H1 (cell line): ENCODE measurements at regions of chr19 and their contacts with region 1.

Region 1: GRCh38 chr19:51097166-51097738 is 11.0 kb downstream of the CTU1 start:
- DNase-seq: peak in 1 of 2 experiments; percentile 89
- H3K4me3 ChIP-seq: no peak overlapping the region
- H3K27ac ChIP-seq: no peak overlapping the region
- H3K4me1 ChIP-seq: peaks cover 0 to 6% (median 2%) of the 10 kb centered on the region in 4 experiments; a peak in 4 of 7 replicates
- H3K27me3 ChIP-seq: no peaks in the 10 kb centered on the region; a peak in 1 of 7 replicates
- CTCF ChIP-seq: peak; percentile 69 to 74 (median 70)
- EP300 ChIP-seq: no peak
- POLR2A ChIP-seq: no peak
- RAD21 ChIP-seq: peak; percentile 55 to 66

Region 2: DNA sequence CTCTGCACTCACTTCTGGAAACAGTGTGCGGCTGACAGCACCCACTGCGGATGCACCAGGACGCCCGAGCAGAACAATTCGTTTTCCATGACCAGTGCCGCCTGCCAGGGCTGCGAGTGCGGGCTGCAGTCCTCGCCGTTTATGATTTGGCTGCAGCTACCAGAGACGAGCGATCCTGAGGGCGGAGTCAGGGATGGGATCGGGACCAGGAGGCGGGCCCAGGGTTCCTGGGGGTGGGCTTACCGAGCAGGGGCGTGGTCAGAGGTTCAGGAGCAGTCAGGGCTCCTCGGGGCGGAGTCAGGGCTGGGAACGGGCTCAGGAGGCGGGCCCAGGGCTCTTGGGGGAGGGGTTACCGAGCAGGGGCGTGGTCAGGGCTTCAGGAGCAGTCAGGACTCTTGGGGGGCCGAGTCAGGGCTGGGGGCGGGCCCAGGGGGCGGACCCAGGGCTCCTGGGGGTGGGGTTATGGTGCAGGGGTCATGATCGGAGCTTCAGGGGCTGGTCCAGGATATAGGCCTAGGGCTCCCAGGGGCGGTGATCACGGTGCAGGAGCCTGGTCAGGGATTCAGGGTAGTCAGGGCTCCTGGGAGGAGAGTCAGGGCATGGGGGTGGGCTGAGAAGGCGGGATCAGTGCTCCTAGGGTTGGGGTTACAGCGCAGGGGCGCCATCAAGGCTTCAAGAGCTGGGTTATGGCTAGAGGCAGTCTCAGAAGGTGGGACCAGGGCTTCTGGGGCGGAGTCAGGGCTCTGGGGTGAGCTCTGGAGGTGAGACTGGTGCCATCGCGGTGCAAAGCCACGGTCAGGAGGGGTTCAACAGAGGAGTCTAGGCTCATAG is 187.8 kb before region 1 on chr19:
- CTCF ChIA-PET with region 1: interaction called, 25 read pairs
- POLR2A ChIA-PET with region 1: no interaction called
- DNase-seq: peak; percentile 95 to 100
- H3K4me3 ChIP-seq: peak overlapping the region; percentile 38 to 68 (median 54)
- H3K27ac ChIP-seq: no peak overlapping the region
- H3K4me1 ChIP-seq: peaks cover 0 to 14% (median 9%) of the 10 kb centered on the region in 4 experiments; a peak in 5 of 7 replicates
- H3K27me3 ChIP-seq: peaks cover 20 to 40% (median 32%) of the 10 kb centered on the region in 4 experiments
- CTCF ChIP-seq: no peak
- EP300 ChIP-seq: no peak
- POLR2A ChIP-seq: no peak
- RAD21 ChIP-seq: no peak

Region 3: DNA sequence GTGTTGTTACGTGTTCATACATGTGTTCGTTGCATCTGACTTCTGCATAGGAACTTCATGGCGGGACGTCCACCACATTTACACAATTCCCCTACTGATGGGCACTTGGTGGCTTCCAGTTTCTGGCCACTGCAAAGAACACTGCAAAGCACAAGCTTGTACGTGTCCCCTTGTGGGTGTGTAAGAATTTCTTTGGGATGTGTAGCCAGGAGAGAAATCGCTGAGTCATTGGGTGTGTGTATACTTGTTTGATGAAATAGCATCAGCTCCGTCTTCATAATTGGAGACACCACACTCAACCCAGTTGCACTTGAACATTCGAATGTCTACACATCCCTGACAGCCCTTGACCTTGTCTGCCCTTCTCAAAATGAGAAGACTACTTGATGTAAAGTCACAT is 163.6 kb before region 1 on chr19:
- CTCF ChIA-PET with region 1: interaction called, 12 read pairs
- POLR2A ChIA-PET with region 1: no interaction called
- DNase-seq: no peak
- H3K4me3 ChIP-seq: no peak overlapping the region
- H3K27ac ChIP-seq: no peak overlapping the region
- H3K4me1 ChIP-seq: no peaks in the 10 kb centered on the region
- H3K27me3 ChIP-seq: 0 out of 7 replicates have a peak, but pooled peaks cover 0 to 2% (median 0%) of the 10 kb centered on the region in 4 experiments
- CTCF ChIP-seq: no peak
- EP300 ChIP-seq: no peak
- POLR2A ChIP-seq: no peak
- RAD21 ChIP-seq: no peak

Region 4: GRCh38 chr19:50972795-50973376 is 124.4 kb before region 1 on chr19:
- CTCF ChIA-PET with region 1: interaction called, 10 read pairs
- POLR2A ChIA-PET with region 1: no interaction called
- DNase-seq: no peak
- H3K4me3 ChIP-seq: no peak overlapping the region
- H3K27ac ChIP-seq: no peak overlapping the region
- H3K4me1 ChIP-seq: peaks cover 4 to 27% (median 13%) of the 10 kb centered on the region in 4 experiments; a peak in 6 of 7 replicates
- H3K27me3 ChIP-seq: no peaks in the 10 kb centered on the region
- CTCF ChIP-seq: no peak
- EP300 ChIP-seq: no peak
- POLR2A ChIP-seq: no peak
- RAD21 ChIP-seq: no peak

Region 5: DNA sequence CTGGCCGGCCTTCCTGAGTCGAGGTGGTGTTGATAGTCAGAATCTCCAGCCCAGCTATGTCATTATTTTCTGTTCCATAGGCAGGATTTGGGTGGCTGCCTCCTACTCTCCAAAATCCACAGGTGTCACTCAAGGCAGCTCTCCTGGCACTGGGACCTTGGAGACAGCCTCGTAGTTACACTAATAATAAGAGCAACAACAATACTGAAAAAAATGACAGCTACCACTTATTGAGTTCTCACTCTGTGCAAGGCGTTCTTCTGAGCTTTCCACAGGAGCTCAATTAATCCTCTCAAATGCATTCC is 50.3 kb before region 1 on chr19:
- CTCF ChIA-PET with region 1: interaction called, 17 read pairs
- POLR2A ChIA-PET with region 1: no interaction called
- DNase-seq: no peak
- H3K4me3 ChIP-seq: peak overlapping the region in 2 of 4 experiments; percentile 12 to 38; a peak in 2 of 8 replicates
- H3K27ac ChIP-seq: peak overlapping the region; percentile 5; the same call in 1 of the 2 replicates
- H3K4me1 ChIP-seq: peaks cover 0 to 15% (median 7%) of the 10 kb centered on the region in 4 experiments; a peak in 4 of 7 replicates
- H3K27me3 ChIP-seq: no peaks in the 10 kb centered on the region
- CTCF ChIP-seq: no peak
- EP300 ChIP-seq: no peak
- POLR2A ChIP-seq: peak in 1 of 2 experiments; percentile 39; a peak in 1 of 3 replicates
- RAD21 ChIP-seq: no peak

Region 6: GRCh38 chr19:51079481-51080110 is 17.7 kb before region 1 on chr19:
- CTCF ChIA-PET with region 1: interaction called, 21 read pairs
- POLR2A ChIA-PET with region 1: interaction called, 4 read pairs
- DNase-seq: no peak
- H3K4me3 ChIP-seq: no peak overlapping the region
- H3K27ac ChIP-seq: no peak overlapping the region
- H3K4me1 ChIP-seq: peaks cover 2 to 6% (median 3%) of the 10 kb centered on the region in 4 experiments; a peak in 4 of 7 replicates
- H3K27me3 ChIP-seq: no peaks in the 10 kb centered on the region
- CTCF ChIP-seq: no peak
- EP300 ChIP-seq: no peak
- POLR2A ChIP-seq: no peak
- RAD21 ChIP-seq: no peak

Region 7: GRCh38 chr19:51219307-51219706 is 122.1 kb after region 1 on chr19:
- CTCF ChIA-PET with region 1: no interaction called
- POLR2A ChIA-PET with region 1: no interaction called
- DNase-seq: no peak
- H3K4me3 ChIP-seq: no peak overlapping the region
- H3K27ac ChIP-seq: no peak overlapping the region
- H3K4me1 ChIP-seq: no peaks in the 10 kb centered on the region
- H3K27me3 ChIP-seq: no peaks in the 10 kb centered on the region; a peak in 1 of 7 replicates
- CTCF ChIP-seq: no peak
- EP300 ChIP-seq: no peak
- POLR2A ChIP-seq: no peak
- RAD21 ChIP-seq: no peak